ENCODE measurements at regions of chr9 and their contacts with region 1.

Region 1: DNA sequence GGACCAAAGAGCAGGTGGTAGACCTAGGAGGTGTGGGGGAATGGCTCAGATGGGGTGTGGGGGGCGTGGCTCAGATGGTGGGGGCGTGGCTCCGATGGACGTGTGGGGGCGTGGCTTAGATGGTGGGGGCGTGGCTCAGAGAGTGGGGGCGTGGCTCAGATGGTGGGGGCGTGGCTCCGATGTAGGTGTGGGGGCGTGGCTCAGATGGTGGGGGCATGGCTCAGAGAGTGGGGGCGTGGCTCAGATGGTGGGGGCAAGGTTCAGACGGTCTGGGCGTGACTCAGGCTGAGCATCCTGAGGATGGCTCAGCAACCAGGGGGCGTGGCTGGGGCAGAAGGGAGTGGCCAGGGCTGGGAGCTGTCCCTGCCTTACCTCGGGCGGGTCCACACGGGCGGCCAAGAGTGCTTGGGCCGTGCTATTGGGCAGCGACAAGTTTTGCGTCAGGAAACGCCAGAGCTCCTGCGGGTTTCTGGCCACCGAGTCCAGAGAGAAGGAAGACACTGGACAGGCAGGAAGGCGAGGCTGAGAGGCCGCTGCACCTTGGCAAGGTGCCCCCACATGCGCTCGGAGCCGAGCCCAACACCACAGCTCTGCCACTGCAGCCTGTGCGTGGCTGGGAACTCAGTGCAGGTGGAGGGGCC is 5.9 kb downstream of the ABCA2 start:
- DNase-seq: peak; percentile 81 to 89
- H3K4me3 ChIP-seq: no peak overlapping the region
- H3K27ac ChIP-seq: no peak overlapping the region
- H3K4me1 ChIP-seq: no peaks in the 10 kb centered on the region
- H3K27me3 ChIP-seq: no peaks in the 10 kb centered on the region
- CTCF ChIP-seq: no peak

Region 2: GRCh38 chr9:136865735-136866103 is 156.4 kb before region 1 on chr9:
- CTCF ChIA-PET with region 1: no interaction called
- POLR2A ChIA-PET with region 1: no interaction called
- intact Hi-C with region 1: no loop called
- DNase-seq: no peak
- H3K4me3 ChIP-seq: peak overlapping the region; percentile 98
- H3K27ac ChIP-seq: peak overlapping the region; percentile 54; the same call in 1 of the 2 replicates
- H3K4me1 ChIP-seq: peaks cover 16% of the 10 kb centered on the region
- H3K27me3 ChIP-seq: no peaks in the 10 kb centered on the region
- CTCF ChIP-seq: no peak

Region 3: DNA sequence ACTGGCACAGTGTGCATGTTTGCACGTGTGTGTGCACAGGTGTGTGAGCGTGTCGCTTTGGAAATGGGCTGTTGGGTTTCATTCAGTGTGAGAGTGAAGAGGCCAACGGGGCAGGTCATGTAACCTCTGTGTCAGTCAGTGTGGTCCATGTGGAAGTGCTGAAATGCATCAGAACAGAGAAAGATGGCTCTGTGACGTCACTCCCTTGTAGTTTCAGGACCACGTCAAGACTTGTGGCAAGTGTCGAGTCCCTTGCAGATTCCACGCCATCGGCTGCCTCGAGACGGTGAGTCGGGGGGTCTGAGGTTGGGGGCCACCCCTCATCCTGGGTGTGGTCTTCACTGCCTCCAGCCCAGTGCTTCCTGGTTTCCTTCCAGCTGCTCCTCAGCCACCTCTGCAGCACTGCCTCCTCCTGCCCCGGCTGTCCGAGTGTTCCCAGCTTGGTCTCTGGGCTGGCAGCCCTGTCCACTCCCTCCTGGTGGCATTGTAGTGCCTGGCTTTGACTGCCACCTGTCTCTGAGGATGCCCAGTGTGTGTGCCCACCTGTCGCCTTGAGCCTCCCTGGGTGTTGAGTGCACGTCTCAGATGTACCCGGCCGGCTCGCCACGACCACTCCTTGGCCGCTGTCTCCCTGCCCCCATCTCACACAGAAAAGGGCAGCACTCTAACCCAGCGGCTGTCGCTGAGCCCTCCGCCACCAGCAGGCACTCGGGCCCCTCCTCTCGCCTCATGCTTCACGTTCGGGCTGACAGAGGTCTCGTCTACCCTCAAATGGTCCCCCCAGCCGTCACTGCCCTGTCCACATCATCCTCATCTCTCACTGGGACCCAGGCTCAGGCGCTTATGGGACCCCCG is 105.5 kb before region 1 on chr9:
- CTCF ChIA-PET with region 1: no interaction called
- POLR2A ChIA-PET with region 1: no interaction called
- intact Hi-C with region 1: no loop called
- DNase-seq: no peak
- H3K4me3 ChIP-seq: no peak overlapping the region
- H3K27ac ChIP-seq: no peak overlapping the region
- H3K4me1 ChIP-seq: no peaks in the 10 kb centered on the region
- H3K27me3 ChIP-seq: no peaks in the 10 kb centered on the region
- CTCF ChIP-seq: no peak

Region 4: DNA sequence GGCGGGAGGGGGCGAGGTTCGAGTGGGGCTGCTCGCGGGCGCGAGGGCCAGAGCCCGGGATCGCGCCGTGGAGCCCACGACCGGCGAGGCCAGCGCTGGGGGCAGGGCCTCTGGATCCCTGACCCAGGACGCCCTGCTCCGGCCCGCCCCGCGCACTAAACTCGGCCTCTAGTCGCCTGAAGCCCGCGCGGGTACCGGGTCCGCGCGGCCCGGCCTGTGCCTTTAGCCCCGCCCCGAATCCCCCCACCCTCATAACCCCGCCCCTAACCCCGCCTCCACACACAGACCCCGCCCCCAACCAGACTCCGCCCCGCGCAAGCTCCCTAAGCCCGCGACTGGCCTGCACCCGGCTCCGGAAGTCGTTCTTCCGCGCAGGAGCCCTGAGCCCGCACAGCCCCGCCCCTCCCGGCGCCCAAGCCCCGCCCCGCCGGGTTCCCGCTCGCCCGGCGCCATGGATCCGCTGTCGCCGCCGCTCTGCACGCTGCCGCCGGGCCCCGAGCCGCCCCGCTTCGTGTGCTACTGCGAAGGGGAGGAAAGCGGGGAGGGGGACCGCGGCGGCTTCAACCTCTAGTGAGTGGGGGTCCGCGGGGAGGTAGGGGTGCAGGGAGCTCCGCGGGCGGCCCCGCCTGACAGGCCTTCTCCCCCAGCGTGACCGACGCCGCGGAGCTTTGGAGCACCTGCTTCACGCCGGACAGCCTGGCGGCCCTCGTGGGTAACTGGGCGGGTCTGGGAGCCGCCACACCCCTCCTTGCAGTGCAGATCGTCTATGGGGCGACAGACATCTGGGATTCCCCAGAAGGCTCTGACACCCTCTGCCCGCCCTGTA is 29.9 kb before region 1 on chr9 and contains the start of gene PAXX:
- CTCF ChIA-PET with region 1: no interaction called
- POLR2A ChIA-PET with region 1: interaction called, 18 read pairs
- intact Hi-C with region 1: no loop called
- DNase-seq: peak; percentile 77 to 97
- H3K4me3 ChIP-seq: peak within 1 kb of the TSS; percentile 88
- H3K27ac ChIP-seq: peak within 1 kb of the TSS; percentile 42
- H3K4me1 ChIP-seq: peaks cover 22% of the 10 kb centered on the region
- H3K27me3 ChIP-seq: no peaks in the 10 kb centered on the region
- CTCF ChIP-seq: no peak
- total RNA-seq, gene PAXX: 54.9 and 78.9 TPM in 2 replicates

Region 5: DNA sequence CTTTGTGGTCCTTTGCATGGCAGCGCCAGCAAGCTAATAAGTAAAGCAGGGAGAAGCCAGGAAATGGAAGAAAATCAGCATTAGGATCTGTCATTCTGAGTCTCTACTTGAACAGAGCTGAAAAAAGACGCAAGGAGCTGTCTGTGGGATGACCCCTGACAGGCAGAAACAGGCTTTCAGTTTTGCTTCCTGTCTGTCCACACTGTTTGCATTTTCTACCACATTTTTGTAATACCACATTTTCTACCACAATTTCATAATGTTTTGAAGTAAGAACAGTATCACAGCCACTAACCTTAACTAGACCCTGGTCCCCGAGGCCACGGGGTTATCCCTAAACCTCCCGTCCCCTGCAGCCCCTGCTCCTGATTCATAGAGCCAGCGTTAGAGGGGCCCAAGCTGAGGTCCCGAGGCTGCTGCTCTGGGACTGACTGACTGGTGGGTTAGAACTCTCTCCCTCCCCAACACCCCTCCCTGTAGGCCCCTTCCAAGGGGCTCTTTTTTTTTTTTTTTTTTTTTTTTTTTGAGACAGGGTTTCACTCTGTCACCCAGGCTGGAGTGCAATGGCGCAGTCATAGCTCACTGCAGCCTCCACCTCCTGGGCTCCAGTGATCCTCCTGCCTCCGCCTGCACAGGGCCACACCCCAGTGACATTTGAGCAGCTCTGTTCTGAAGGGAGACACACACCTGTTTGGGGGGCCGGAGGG is 21.8 kb before region 1 on chr9:
- CTCF ChIA-PET with region 1: interaction called, 12 read pairs
- POLR2A ChIA-PET with region 1: no interaction called
- intact Hi-C with region 1: no loop called
- DNase-seq: no peak
- H3K4me3 ChIP-seq: no peak overlapping the region
- H3K27ac ChIP-seq: no peak overlapping the region
- H3K4me1 ChIP-seq: peaks cover 30% of the 10 kb centered on the region
- H3K27me3 ChIP-seq: no peaks in the 10 kb centered on the region
- CTCF ChIP-seq: no peak